Sigmoid colon (tissue), 7 donors: ENCODE measurements at regions of chrX and their contacts with region 1.

Region 1: DNA sequence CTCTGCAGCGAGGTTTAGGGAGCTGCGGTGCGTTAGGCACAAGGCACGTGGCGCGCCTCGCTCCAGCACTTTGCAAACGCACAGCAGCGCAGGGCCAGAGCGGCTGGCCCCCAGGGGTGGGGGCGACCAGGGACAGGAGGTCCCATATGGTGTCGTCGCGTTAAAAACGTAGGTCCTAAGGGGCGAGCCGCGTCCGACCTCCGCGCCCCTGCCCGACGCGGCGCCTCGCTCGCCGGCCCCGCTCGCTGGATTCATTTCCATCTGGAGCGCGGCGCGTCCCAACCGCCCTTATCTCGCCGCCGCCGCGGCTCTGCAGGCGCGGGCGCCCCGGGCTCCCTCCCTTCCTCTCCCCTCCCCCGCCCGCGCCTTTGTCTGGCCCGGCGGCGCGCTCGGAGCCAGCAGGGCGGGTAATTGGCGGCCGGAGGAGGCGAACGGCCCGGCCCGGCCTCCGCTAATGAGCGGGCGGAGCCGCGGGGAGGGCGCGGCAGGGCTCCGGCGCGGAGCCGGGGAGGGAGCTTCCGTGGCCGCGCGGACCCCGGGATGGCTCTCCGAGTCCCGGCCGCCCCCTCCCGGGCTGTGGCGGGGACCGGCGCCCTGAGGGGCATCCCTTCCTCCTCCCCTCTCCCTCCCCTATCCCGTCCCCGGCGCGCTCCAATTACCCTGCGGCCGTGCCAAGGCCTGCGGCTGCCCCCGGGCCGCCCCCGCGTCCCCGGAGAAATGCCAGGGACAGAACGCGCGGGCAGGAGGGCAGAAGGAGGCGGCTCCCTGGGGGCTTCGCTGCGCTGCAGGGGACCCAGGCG is 409.0 kb downstream of the BCOR start:
- DNase-seq: peak; percentile 76
- H3K4me3 ChIP-seq: peak overlapping the region; percentile 20 to 54 (median 46)
- H3K27ac ChIP-seq: peak overlapping the region; percentile 54 to 71 (median 65)
- H3K4me1 ChIP-seq: peaks cover 0 to 18% (median 11%) of the 10 kb centered on the region in 4 donors
- H3K27me3 ChIP-seq: peaks cover 0 to 8% (median 0%) of the 10 kb centered on the region in 3 donors
- CTCF ChIP-seq: no peak
- EP300 ChIP-seq: no peak
- POLR2A ChIP-seq: no peak

Region 2: GRCh38 chrX:39477762-39478120 is 211.0 kb before region 1 on chrX:
- intact Hi-C with region 1: loop called (anchors 10 kb)
- DNase-seq: no peak
- H3K4me3 ChIP-seq: no peak overlapping the region
- H3K27ac ChIP-seq: peak overlapping the region in 1 of 4 donors; percentile 42
- H3K4me1 ChIP-seq: peaks cover 0 to 6% (median 0%) of the 10 kb centered on the region in 4 donors
- H3K27me3 ChIP-seq: peaks cover 0 to 3% (median 0%) of the 10 kb centered on the region in 3 donors
- CTCF ChIP-seq: no peak
- EP300 ChIP-seq: no peak
- POLR2A ChIP-seq: no peak